ENCODE measurements at regions of chr20 and their contacts with region 1.

Region 1: DNA sequence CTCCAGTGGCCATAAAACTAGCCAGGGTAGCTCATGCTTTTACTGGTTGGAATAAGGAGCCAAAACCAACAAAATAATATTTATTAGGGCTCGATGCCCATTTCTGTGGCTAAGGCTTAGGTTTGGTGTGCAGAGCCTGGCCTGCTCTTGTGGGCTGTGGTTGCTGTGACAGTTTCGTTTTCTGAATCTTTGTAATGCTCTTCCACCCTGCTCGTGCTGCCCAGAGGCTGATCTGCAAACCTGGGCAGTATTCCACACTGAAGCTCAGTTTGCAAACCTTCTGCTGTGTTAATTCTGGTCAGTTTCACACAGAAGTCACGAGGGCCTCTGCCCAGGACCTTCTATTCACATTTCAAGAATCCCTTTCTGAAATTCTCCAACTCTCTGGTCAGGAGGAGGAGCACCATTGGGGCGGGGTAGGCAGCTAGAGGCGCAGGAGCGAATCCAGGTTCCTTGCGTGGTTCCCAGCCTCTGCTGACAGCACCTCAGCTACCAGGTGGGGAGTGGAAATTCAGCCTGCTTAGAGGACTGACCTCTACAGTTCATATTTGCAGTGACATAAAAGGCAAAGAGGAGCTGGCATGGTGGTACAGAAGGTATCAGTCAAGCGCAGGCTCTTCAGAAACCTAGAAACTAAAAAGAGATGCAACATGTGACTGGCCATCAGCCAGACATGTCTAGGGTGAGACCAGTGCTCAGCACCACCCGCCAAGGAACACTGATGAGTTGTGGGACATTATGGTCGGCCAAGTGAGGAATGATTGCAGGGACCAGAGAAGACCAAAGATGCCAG is 14.3 kb upstream of the C20orf144 start:
- DNase-seq: peak; percentile 72
- H3K4me3 ChIP-seq: no peak overlapping the region
- H3K27ac ChIP-seq: peak overlapping the region; percentile 24; the same call in 1 of the 2 replicates
- H3K4me1 ChIP-seq: peaks cover 18% of the 10 kb centered on the region
- H3K27me3 ChIP-seq: no peaks in the 10 kb centered on the region

Region 2: DNA sequence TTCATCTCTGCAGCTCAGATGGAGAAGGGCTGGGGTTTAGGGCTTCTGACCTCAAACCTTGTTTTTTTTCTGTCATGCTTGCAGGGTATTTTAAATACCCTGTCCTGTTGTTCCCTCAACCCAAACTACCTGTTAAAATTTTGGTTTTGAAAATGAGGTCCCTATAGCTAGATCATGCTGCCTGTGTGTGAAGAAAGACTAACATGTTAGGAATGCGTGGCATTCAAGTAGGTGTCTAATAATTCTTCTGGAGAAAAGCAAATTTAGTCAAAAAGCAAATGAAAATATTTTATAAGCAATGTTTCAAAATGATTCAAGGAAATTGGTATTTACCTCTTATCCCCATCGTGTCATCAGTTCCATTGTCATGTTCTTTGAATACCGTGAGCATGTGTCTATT is 62.8 kb before region 1 on chr20:
- in situ Hi-C with region 1: loop called (anchors 10 kb)
- DNase-seq: peak; percentile 36
- H3K4me3 ChIP-seq: no peak overlapping the region
- H3K27ac ChIP-seq: no peak overlapping the region
- H3K4me1 ChIP-seq: peaks cover 13% of the 10 kb centered on the region
- H3K27me3 ChIP-seq: no peaks in the 10 kb centered on the region

Measured in GM23248 (cell line).